IMR-90 (cell line): ENCODE measurements at regions of chr17 and their contacts with region 1.

Region 1: DNA sequence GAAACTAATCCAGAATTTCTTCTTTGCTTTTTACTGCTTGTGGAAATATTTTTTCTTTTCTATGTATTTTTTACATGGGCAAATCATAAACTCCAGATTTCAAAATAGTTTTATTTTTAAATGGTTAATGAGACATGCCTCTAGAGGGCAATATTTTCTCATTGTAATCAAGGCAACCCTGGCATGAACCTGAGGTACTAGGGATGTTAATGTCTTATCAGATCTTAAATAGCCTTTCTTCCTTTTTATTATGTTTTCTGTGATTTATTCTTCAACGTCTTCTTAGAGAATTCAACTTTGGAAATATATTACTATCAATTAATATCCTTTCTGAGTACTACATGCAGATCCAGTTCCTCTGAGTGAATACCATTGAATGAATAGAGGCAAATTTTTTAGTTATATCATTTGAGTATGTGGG is 324.7 kb downstream of the BCAS3 start:
- DNase-seq: peak; percentile 79
- ATAC-seq: peak; percentile 75
- H3K4me3 ChIP-seq: no peak overlapping the region
- H3K27ac ChIP-seq: no peak overlapping the region
- H3K4me1 ChIP-seq: no peaks in the 10 kb centered on the region
- H3K27me3 ChIP-seq: no peaks in the 10 kb centered on the region
- CTCF ChIP-seq: peak; percentile 71
- POLR2A ChIP-seq: no peak
- RAD21 ChIP-seq: peak; percentile 84

Region 2: GRCh38 chr17:60971515-60972369 is 30.6 kb before region 1 on chr17:
- CTCF ChIA-PET with region 1: interaction called, 3 read pairs
- POLR2A ChIA-PET with region 1: no interaction called
- dilution Hi-C with region 1: no loop called
- in situ Hi-C with region 1: no loop called
- intact Hi-C with region 1: loop called (anchors 2 kb)
- DNase-seq: peak; percentile 80
- ATAC-seq: peak; percentile 99
- H3K4me3 ChIP-seq: no peak overlapping the region
- H3K27ac ChIP-seq: no peak overlapping the region
- H3K4me1 ChIP-seq: no peaks in the 10 kb centered on the region
- H3K27me3 ChIP-seq: no peaks in the 10 kb centered on the region
- CTCF ChIP-seq: peak; percentile 86
- POLR2A ChIP-seq: no peak
- RAD21 ChIP-seq: peak; percentile 90

Region 3: DNA sequence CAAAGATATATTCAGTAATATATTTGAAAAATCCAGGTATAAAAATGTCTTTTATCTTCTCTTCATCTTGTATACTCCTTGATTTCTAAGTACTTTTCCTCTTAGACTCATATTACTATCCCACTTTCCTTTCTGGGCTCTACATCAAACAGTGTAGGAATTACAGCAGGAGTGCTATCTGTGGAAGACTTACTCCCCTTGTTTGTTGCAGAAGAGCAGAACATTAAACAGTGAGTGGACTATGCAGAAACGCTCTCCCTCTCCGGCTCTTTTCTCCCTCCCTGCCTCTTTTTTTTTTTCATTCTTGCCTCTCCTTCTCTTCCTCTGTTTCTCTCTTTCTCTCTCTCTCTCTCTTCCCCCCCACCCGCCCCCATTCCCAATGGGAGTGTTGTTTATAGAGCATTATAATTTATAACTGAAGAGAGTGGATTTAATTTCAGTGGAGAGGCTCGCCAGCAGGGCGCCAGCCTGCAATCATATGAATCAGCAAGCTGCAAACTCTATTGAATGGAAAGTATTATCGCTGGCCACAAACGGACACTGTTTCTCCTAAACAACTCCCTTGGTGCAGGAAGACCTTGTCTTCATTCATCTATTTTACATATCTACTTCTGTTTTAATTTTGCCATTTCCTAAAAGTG is 155.0 kb after region 1 on chr17:
- CTCF ChIA-PET with region 1: no interaction called
- POLR2A ChIA-PET with region 1: no interaction called
- dilution Hi-C with region 1: no loop called
- in situ Hi-C with region 1: no loop called
- intact Hi-C with region 1: loop called (anchors 1 kb)
- DNase-seq: peak; percentile 71
- ATAC-seq: peak; percentile 80
- H3K4me3 ChIP-seq: peak overlapping the region; percentile 24; the same call in 1 of the 2 replicates
- H3K27ac ChIP-seq: peak overlapping the region; percentile 91; the same call in 1 of the 2 replicates
- H3K4me1 ChIP-seq: peaks cover 9% of the 10 kb centered on the region
- H3K27me3 ChIP-seq: no peaks in the 10 kb centered on the region
- CTCF ChIP-seq: 0 out of 2 replicates have a peak, but pooled peaks have one; percentile 12
- POLR2A ChIP-seq: no peak
- RAD21 ChIP-seq: peak; percentile 36